Activated B cell treated with CpG ODN at 0.5 μM for 24 hours (primary cell): ENCODE measurements at regions of chr7 and their contacts with region 1.

Region 1: GRCh38 chr7:54773472-54774399 is 14.7 kb upstream of the SEC61G start:
- DNase-seq: peak; percentile 34
- ATAC-seq: peak; percentile 85
- H3K4me3 Mint-ChIP-seq: peak overlapping the region; percentile 76
- H3K27ac Mint-ChIP-seq: no peak overlapping the region
- H3K4me1 Mint-ChIP-seq: peaks cover 6% of the 10 kb centered on the region
- H3K27me3 Mint-ChIP-seq: peaks cover 18% of the 10 kb centered on the region
- CTCF ChIP-seq: peak; percentile 95

Region 2: DNA sequence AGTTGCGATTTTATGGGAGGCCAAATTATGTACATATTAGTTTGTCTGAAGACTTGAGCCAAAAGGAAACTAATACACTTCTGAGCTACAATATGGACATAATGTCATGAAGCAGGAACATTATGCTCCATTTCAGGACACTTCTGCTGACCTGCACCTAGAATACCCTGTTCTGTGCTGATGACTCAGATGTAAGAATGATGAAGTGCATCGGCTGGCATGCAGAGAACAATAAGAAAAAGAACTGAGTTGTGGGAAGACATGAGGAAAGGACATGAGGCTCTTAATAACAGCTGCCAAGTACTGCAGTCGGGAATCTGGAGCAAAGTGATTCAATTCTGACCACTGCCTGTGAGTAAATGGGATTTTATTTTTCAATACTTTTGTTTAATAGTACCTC is 424.5 kb before region 1 on chr7:
- CTCF ChIA-PET with region 1: no interaction called
- POLR2A ChIA-PET with region 1: no interaction called
- intact Hi-C with region 1: no loop called
- DNase-seq: no peak
- ATAC-seq: no peak
- H3K4me3 Mint-ChIP-seq: no peak overlapping the region
- H3K27ac Mint-ChIP-seq: no peak overlapping the region
- H3K4me1 Mint-ChIP-seq: no peaks in the 10 kb centered on the region
- H3K27me3 Mint-ChIP-seq: no peaks in the 10 kb centered on the region
- CTCF ChIP-seq: no peak

Region 3: GRCh38 chr7:54758702-54759592 is 14.8 kb before region 1 on chr7 and contains the start of gene SEC61G:
- CTCF ChIA-PET with region 1: interaction called, 20 read pairs
- POLR2A ChIA-PET with region 1: interaction called, 11 read pairs
- intact Hi-C with region 1: no loop called
- DNase-seq: peak; percentile 89
- ATAC-seq: peak; percentile 95
- H3K4me3 Mint-ChIP-seq: peak within 1 kb of the TSS; percentile 98
- H3K27ac Mint-ChIP-seq: peak within 1 kb of the TSS; percentile 92
- H3K4me1 Mint-ChIP-seq: peaks cover 21% of the 10 kb centered on the region
- H3K27me3 Mint-ChIP-seq: no peaks in the 10 kb centered on the region
- CTCF ChIP-seq: no peak
- total RNA-seq, gene SEC61G: 57.3 and 65.8 TPM in 2 replicates

Region 4: DNA sequence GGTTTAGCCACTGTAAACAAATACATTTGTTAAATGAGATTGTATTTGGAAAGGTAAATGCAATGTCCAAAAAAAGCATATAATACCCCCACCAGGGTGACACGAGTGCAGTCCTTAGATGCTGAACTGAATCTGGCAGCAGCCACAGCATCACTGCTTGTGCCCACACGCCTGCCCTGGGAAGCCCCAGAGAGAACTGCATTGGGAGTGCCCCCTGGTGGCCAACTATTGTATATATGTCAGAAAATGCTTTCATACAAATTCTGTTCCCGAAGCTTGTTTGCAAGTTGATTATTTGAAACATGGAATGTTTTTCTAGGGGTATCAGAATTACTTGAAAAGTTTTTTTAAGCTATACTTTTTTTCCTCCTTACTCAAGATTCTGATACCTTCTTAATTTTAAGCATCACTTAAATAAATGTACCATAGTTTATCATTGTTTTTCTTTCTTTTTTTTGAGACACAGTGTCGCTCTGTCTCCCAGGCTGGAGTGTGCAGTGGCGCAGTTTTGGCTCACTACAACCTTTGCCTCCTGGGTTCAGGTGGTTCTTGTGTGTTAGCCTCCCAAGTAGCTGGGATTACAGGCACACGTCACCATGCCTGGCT is 641.5 kb after region 1 on chr7:
- CTCF ChIA-PET with region 1: interaction called, 7 read pairs
- POLR2A ChIA-PET with region 1: no interaction called
- intact Hi-C with region 1: loop called (anchors 1 kb)
- DNase-seq: peak; percentile 55
- ATAC-seq: peak; percentile 99
- H3K4me3 Mint-ChIP-seq: no peak overlapping the region
- H3K27ac Mint-ChIP-seq: no peak overlapping the region
- H3K4me1 Mint-ChIP-seq: peaks cover 2% of the 10 kb centered on the region
- H3K27me3 Mint-ChIP-seq: no peaks in the 10 kb centered on the region
- CTCF ChIP-seq: no peak